HepG2 (cell line): ENCODE measurements at regions of chr9 and their contacts with region 1.

Region 1: GRCh38 chr9:112333639-112334431 is 416 bp upstream of the PTBP3 start:
- DNase-seq: peak; percentile 90
- ATAC-seq: peak; percentile 56
- H3K4me3 ChIP-seq: peak overlapping the region; percentile 89 to 95 (median 95)
- H3K27ac ChIP-seq: peak overlapping the region; percentile 97
- H3K4me1 ChIP-seq: peaks cover 63% of the 10 kb centered on the region
- H3K27me3 ChIP-seq: no peaks in the 10 kb centered on the region
- CTCF ChIP-seq: peak; percentile 72
- EP300 ChIP-seq: no peak
- POLR2A ChIP-seq: peak; percentile 22 to 50; a peak in 2 of 4 replicates
- RAD21 ChIP-seq: peak; percentile 57

Region 2: GRCh38 chr9:112119225-112120029 is 214.4 kb before region 1 on chr9:
- CTCF ChIA-PET with region 1: no interaction called
- POLR2A ChIA-PET with region 1: interaction called, 3 read pairs
- in situ Hi-C with region 1: no loop called
- intact Hi-C with region 1: loop called (anchors 1 kb)
- DNase-seq: peak; percentile 99
- ATAC-seq: peak; percentile 97
- H3K4me3 ChIP-seq: peak overlapping the region in 1 of 3 experiments; percentile 60; a peak in 2 of 6 replicates
- H3K27ac ChIP-seq: peak overlapping the region; percentile 96
- H3K4me1 ChIP-seq: peaks cover 64% of the 10 kb centered on the region
- H3K27me3 ChIP-seq: no peaks in the 10 kb centered on the region
- CTCF ChIP-seq: no peak
- EP300 ChIP-seq: peak; percentile 14 to 96; a peak in 3 of 4 replicates
- POLR2A ChIP-seq: peak; percentile 67 to 69; a peak in 3 of 4 replicates
- RAD21 ChIP-seq: no peak

Region 3: DNA sequence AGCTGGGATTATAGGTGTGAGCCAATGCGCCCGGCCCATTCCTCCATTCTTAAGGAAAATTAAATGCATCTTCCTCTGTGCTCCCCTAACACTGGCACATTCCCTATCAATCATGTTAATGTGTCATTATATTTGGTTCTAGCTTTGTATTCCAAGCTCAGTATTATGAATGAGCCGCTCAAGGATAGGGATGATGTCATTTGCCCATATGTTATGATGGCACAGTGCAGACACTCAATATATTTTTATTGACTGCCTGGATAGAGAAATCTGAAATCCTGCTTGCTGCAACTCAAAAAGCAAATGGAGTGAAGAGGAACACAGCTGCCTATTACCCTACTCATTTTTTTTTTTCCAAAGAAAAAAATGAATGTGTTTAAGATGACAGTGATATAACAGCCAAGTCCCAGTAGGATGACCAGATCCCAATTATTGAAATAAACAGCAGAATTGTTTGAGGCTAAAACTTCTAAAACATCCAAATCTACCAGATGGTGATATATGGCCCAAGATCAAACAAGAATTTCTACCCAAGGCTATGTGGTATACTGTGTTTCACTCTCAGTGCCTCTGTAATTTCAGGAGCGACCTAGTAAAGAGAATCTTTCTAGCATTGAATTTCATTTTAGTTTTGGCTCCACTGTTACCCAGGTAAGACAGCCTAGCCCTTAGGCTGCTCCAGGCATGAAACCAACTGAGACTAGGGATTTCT is 175.0 kb before region 1 on chr9:
- CTCF ChIA-PET with region 1: no interaction called
- POLR2A ChIA-PET with region 1: no interaction called
- in situ Hi-C with region 1: no loop called
- intact Hi-C with region 1: no loop called
- DNase-seq: no peak
- ATAC-seq: no peak
- H3K4me3 ChIP-seq: no peak overlapping the region
- H3K27ac ChIP-seq: no peak overlapping the region
- H3K4me1 ChIP-seq: peaks cover 19% of the 10 kb centered on the region
- H3K27me3 ChIP-seq: no peaks in the 10 kb centered on the region
- CTCF ChIP-seq: no peak
- EP300 ChIP-seq: no peak
- POLR2A ChIP-seq: no peak
- RAD21 ChIP-seq: no peak

Region 4: GRCh38 chr9:112271466-112272092 is 62.3 kb before region 1 on chr9:
- CTCF ChIA-PET with region 1: no interaction called
- POLR2A ChIA-PET with region 1: no interaction called
- in situ Hi-C with region 1: no loop called
- intact Hi-C with region 1: loop called (anchors 10 kb)
- DNase-seq: peak; percentile 39
- ATAC-seq: peak; percentile 38; the same call in 1 of the 3 replicates
- H3K4me3 ChIP-seq: no peak overlapping the region
- H3K27ac ChIP-seq: peak overlapping the region; percentile 35
- H3K4me1 ChIP-seq: peaks cover 11% of the 10 kb centered on the region
- H3K27me3 ChIP-seq: no peaks in the 10 kb centered on the region
- CTCF ChIP-seq: no peak
- EP300 ChIP-seq: no peak
- POLR2A ChIP-seq: no peak
- RAD21 ChIP-seq: no peak

Region 5: DNA sequence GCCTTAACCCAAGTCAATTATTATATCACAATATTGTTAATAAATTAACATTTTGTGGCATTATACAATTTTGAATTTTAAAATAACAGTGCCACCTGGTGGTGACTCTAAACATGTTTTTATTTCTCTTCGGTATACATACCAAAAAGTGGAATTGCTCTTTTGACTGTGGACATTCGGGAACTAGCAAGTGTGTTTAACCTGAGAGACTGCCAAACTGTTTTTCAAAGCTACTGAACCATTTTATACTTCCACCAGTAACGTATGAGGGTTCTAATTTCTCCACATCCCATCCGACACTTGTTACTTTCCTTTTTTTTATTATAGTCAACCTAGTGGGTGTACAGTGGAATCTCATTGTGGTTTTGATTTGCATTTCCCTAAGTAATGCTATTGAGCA is 27.8 kb after region 1 on chr9:
- CTCF ChIA-PET with region 1: interaction called, 6 read pairs
- POLR2A ChIA-PET with region 1: interaction called, 4 read pairs
- in situ Hi-C with region 1: no loop called
- intact Hi-C with region 1: loop called (anchors 2 kb)
- DNase-seq: peak; percentile 37
- ATAC-seq: peak; percentile 57
- H3K4me3 ChIP-seq: no peak overlapping the region
- H3K27ac ChIP-seq: no peak overlapping the region
- H3K4me1 ChIP-seq: peaks cover 6% of the 10 kb centered on the region
- H3K27me3 ChIP-seq: no peaks in the 10 kb centered on the region
- CTCF ChIP-seq: peak; percentile 56
- EP300 ChIP-seq: no peak
- POLR2A ChIP-seq: no peak
- RAD21 ChIP-seq: 0 out of 2 replicates have a peak, but pooled peaks have one; percentile 36